Ascending aorta (tissue), 2 donors: ENCODE measurements at regions of chr3 and their contacts with region 1.

Region 1: DNA sequence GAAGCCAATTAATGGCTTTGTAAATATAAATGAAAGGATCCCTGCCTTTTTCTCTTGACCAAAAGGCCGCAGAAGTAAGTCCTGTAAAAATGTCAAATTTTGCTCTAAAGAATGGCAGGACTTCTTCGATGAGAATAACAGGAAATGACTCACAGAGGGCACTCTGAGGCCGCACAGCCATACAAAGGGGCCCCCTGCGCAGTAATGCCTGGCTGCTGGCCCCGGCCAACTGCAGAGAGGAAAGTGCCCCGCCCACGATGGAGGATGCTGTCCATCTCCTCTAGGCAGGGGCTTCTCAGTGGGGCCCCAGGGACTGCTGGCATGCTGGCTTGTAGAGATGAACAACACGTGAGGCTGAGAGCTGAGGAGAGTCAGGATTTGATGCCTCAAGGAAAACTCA is 18.1 kb upstream of the SCN10A start:
- DNase-seq: peak in 1 of 2 donors; percentile 78
- H3K4me3 ChIP-seq: no peak overlapping the region
- H3K27ac ChIP-seq: peak overlapping the region; percentile 28 to 31
- H3K4me1 ChIP-seq: peaks cover 10 to 16% of the 10 kb centered on the region in 2 donors
- H3K27me3 ChIP-seq: no peaks in the 10 kb centered on the region
- CTCF ChIP-seq: no peak

Region 2: GRCh38 chr3:38101811-38102443 is 732.2 kb before region 1 on chr3:
- intact Hi-C with region 1: no loop called
- DNase-seq: no peak
- H3K4me3 ChIP-seq: no peak overlapping the region
- H3K27ac ChIP-seq: no peak overlapping the region
- H3K4me1 ChIP-seq: no peaks in the 10 kb centered on the region
- H3K27me3 ChIP-seq: no peaks in the 10 kb centered on the region
- CTCF ChIP-seq: no peak

Region 3: DNA sequence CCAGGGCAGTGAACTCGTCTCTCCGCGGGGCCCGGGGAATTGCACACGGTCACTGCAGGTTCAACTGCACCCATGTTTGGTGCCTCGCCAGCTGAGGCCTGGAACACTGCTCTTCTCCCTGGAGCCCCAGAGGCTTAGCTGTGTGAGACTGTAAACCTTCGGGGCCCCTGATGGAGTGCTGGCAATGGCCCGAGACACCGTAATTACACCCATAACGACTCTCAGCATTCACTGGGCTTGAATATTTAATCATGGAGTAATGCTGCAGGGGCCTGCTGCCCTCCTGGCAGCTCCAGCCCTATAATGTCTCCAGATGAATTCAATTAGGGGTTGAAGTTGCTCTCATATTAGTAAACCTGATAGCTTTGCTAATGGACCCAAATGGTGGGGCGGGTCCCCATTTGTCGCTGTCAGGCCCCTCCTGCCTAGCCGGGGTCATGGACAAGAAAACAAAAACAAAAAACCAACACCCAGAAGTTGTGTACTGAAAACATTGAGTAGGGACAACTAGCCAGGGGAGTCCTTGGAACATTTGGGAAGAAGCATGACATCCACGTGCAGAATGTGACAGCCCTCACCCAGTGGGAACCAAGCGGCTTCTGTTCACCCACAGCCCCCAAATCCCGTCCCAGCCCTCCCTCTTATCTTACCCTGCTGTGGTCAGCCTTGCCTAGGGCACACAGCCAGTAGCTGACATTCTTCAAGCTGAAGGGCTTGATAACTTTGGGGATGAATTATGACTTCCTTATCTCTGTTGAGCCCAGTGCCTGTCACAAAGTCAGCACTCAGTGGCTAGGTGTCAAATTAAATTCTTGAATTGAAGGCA is 110.3 kb before region 1 on chr3:
- intact Hi-C with region 1: loop called (anchors 5 kb)
- DNase-seq: no peak
- H3K4me3 ChIP-seq: no peak overlapping the region
- H3K27ac ChIP-seq: peak overlapping the region; percentile 54 to 73
- H3K4me1 ChIP-seq: peaks cover 10 to 22% of the 10 kb centered on the region in 2 donors
- H3K27me3 ChIP-seq: no peaks in the 10 kb centered on the region
- CTCF ChIP-seq: no peak